ENCODE measurements at regions of chr20 and their contacts with region 1.

Region 1: GRCh38 chr20:59835448-59836395 is 97.7 kb downstream of the SYCP2 start:
- DNase-seq: peak in 6 of 10 donors; percentile 33 to 77 (median 56)
- H3K4me3 ChIP-seq: peak overlapping the region in 54 of 59 donors; percentile 6 to 55 (median 35)
- H3K27ac ChIP-seq: peak overlapping the region in 42 of 59 donors; percentile 1 to 75 (median 34)
- H3K27me3 ChIP-seq: no peaks in the 10 kb centered on the region
- CTCF ChIP-seq: no peak

Region 2: DNA sequence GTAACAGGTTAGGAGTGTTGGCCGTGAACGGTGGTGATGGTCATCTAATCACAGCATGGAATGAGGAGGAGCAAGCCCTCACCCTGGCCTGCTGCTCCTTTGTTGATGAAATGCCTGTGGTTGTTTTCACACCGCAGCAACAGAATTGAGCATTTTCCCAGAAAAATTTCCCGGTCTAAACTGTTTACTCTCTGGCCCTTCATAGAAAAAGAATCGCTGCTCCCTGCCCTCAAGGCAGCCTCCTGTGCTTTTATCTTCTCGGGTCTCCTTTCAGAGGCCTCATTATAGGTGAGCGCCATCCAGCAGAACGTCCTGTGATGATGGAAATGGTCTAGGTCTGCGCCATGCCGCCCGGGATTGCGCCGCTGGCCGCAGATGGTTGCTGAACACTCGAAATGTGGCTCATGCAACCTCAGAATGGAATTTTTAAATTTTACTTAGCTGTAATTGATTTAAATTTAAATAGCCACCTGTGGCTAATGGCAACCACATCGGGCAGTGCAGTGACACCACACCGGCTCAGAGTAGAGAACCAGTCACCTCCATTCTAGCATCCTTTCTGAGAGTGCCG is 201.2 kb before region 1 on chr20:
- intact Hi-C with region 1: no loop called
- DNase-seq: peak in 1 of 10 donors; percentile 9
- H3K4me3 ChIP-seq: no peak overlapping the region
- H3K27ac ChIP-seq: peak overlapping the region in 57 of 59 donors; percentile 4 to 100 (median 81)
- H3K27me3 ChIP-seq: no peaks in the 10 kb centered on the region
- CTCF ChIP-seq: no peak

Region 3: DNA sequence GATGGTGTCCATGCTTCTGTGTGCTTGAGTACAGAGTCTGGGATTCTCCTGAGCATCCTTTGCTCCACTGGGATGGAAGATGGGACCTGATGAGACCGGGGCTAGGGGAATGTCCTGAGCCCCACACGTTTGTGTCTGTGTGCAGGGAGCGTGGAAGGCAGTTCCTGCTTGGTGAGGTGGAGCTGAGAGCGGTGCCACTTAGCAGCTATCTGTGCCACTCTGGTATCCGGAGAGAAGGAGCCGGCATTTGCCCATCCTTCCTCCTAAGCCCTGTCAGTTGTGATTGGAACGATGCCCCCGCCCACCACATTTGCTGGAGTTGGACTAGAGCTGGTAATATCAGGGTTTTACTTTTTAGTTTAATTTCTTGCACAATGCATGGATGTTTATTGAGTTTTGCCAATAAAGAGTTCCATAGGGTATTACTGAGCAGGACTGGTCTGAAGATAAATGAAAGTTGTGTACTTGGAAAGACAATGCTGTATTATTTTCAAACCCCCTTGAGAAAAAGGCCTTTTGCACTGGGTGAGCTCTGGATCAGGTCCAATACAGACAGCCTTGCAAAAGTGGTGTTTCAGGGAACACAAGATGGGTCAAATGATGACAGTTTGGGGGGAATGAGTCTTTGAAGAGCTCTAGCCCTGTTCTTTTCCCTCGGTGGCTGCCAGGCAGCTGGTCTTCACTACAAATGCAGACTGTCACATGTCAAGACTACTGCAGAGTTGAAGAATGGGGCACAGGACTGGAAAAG is 33.1 kb before region 1 on chr20:
- intact Hi-C with region 1: loop called in 1 of 2 experiments (anchors 5 kb)
- DNase-seq: peak in 1 of 10 donors; percentile 35
- H3K4me3 ChIP-seq: peak overlapping the region in 3 of 59 donors; percentile 5 to 13 (median 13)
- H3K27ac ChIP-seq: peak overlapping the region in 52 of 59 donors; percentile 2 to 85 (median 56)
- H3K27me3 ChIP-seq: no peaks in the 10 kb centered on the region
- CTCF ChIP-seq: no peak